Prostate gland (tissue), 2 donors: ENCODE measurements at regions of chr1 and their contacts with region 1.

Region 1: DNA sequence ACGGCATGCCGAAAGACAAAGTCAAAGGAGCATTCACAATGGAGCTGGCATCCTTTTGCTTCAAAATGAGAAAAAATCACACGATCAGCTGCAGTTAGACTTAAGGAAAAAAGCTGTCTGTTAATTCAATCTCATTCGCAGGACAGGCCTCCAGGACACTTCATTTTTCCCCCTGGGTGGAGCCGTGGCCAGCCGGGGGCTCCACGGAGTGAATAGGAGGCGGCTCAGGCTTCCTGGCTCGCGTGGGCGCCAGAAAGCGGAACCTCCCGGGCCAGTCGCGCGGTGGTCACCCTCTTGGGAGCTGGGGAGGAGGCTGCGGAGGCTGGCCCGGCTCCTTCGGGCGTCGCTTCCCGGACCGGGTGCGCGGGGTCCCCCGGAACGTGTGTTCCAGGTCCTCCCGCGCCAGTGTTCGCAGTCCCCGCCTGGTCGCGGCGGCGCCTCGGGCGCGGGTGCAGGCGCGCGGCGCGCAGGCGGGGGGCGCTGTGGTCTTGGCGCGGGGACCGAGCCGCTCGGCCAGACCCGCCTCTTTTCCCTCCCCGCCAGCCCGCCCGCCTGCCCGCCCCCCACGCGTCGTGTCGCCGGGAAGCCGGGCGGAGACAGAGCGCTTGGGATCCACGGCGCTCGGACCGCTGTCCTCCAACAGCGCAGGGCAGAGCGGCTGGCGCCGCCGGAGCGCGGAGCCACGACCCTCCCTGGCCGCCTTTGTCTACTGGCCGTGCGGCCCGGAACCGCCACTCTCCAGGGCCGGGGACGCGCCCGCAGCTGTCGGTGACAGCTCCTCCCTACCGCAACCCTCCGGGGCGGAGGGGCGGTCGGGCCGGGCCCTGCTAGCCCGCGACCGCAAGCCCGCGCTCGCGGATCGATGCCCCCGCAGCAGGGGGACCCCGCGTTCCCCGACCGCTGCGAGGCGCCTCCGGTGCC is at the start of gene RHOU:
- DNase-seq: peak; percentile 74
- H3K4me3 ChIP-seq: peak within 1 kb of the TSS; percentile 83 to 90
- H3K27ac ChIP-seq: peak within 1 kb of the TSS; percentile 90 to 94
- H3K4me1 ChIP-seq: peaks cover 3% of the 10 kb centered on the region
- H3K27me3 ChIP-seq: no peaks in the 10 kb centered on the region
- CTCF ChIP-seq: peak; percentile 89 to 98 (median 96)
- POLR2A ChIP-seq: peak; percentile 65
- total RNA-seq, gene RHOU: 39.6 to 75.9 TPM

Region 2: GRCh38 chr1:228434686-228435085 is 300.5 kb before region 1 on chr1:
- intact Hi-C with region 1: no loop called
- DNase-seq: no peak
- H3K4me3 ChIP-seq: no peak overlapping the region
- H3K27ac ChIP-seq: no peak overlapping the region
- H3K4me1 ChIP-seq: no peaks in the 10 kb centered on the region
- H3K27me3 ChIP-seq: no peaks in the 10 kb centered on the region
- CTCF ChIP-seq: no peak
- POLR2A ChIP-seq: no peak

Region 3: DNA sequence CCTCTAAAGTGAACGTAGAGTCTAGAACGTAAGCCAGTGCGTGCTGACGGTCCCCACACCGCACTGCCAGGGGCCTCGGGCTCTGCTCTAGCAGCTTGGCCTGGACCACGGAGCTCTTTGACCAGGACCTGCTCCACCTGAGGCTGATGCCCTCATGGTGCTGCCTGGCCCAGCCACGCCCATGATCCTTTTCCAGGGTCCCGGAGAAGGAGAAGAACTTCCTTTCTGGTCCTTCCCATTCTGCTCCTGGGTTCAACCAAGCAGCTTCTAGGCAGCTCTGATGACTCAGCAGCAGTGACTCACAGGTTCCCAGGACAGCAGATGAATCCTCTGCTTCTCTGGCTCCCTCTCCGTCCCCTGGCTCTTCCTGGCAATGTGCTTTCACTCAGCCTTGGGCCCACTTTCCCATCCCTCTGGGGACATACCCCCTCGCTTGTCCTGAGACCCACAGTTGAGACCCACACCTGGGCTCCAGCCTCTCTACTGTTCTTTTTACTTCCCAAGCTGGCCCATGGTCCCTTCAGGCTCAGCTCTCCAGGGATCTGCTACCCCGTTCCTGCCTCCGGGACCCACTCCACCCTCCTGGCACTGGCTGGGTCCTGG is 289.5 kb after region 1 on chr1:
- intact Hi-C with region 1: loop called (anchors 5 kb)
- DNase-seq: no peak
- H3K4me3 ChIP-seq: no peak overlapping the region
- H3K27ac ChIP-seq: no peak overlapping the region
- H3K4me1 ChIP-seq: no peaks in the 10 kb centered on the region
- H3K27me3 ChIP-seq: no peaks in the 10 kb centered on the region
- CTCF ChIP-seq: no peak
- POLR2A ChIP-seq: no peak

Region 4: GRCh38 chr1:229117664-229118300 is 382.6 kb after region 1 on chr1:
- intact Hi-C with region 1: loop called (anchors 5 kb)
- DNase-seq: peak; percentile 85
- H3K4me3 ChIP-seq: no peak overlapping the region
- H3K27ac ChIP-seq: peak overlapping the region; percentile 44 to 77
- H3K4me1 ChIP-seq: peaks cover 13% of the 10 kb centered on the region
- H3K27me3 ChIP-seq: no peaks in the 10 kb centered on the region
- CTCF ChIP-seq: no peak
- POLR2A ChIP-seq: no peak

Region 5: GRCh38 chr1:229156872-229157271 is 421.7 kb after region 1 on chr1:
- intact Hi-C with region 1: loop called (anchors 2 kb)
- DNase-seq: peak; percentile 16
- H3K4me3 ChIP-seq: no peak overlapping the region
- H3K27ac ChIP-seq: no peak overlapping the region
- H3K4me1 ChIP-seq: no peaks in the 10 kb centered on the region
- H3K27me3 ChIP-seq: no peaks in the 10 kb centered on the region
- CTCF ChIP-seq: peak; percentile 13 to 66 (median 51)
- POLR2A ChIP-seq: no peak

Region 6: GRCh38 chr1:229227298-229227919 is 492.3 kb after region 1 on chr1:
- intact Hi-C with region 1: loop called (anchors 2 kb)
- DNase-seq: peak; percentile 82
- H3K4me3 ChIP-seq: no peak overlapping the region
- H3K27ac ChIP-seq: peak overlapping the region; percentile 12 to 30
- H3K4me1 ChIP-seq: peaks cover 17% of the 10 kb centered on the region
- H3K27me3 ChIP-seq: no peaks in the 10 kb centered on the region
- CTCF ChIP-seq: peak; percentile 87 to 93 (median 89)
- POLR2A ChIP-seq: no peak